ENCODE measurements at regions of chr10 and their contacts with region 1.

Region 1: DNA sequence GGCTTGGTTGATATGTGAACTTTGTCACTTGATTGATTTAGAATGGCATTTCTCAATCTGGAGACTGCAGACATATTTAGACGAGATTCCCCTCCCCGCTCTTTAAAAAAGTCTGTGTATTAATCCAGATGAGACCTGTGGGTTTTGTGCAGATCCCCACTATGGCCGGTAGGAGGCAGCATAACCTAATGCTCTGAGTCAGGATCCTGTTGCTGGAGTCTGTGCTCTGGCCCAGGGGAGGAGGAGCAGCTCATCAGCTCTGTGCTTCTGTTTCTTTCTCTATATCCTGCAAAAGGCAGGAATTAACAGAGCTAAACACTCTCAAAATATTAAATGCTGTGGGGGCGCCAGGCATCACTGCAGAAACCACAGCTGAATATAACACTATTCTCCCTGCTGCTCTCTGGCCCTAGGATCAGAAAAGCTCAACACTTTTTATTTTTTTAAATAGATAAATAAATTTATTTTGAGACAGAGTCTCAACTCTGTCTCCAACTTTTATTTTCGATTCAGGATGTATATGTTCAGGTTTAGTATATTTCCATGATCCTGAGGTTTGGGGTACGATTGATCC is 23.9 kb upstream of the SEPHS1 start:
- DNase-seq: peak; percentile 55
- ATAC-seq: peak; percentile 91

Region 2: GRCh38 chr10:13234172-13234571 is 137.8 kb before region 1 on chr10 and contains the start of gene UCMA:
- intact Hi-C with region 1: no loop called
- DNase-seq: no peak
- ATAC-seq: no peak
- total RNA-seq, gene UCMA: not detected

Region 3: DNA sequence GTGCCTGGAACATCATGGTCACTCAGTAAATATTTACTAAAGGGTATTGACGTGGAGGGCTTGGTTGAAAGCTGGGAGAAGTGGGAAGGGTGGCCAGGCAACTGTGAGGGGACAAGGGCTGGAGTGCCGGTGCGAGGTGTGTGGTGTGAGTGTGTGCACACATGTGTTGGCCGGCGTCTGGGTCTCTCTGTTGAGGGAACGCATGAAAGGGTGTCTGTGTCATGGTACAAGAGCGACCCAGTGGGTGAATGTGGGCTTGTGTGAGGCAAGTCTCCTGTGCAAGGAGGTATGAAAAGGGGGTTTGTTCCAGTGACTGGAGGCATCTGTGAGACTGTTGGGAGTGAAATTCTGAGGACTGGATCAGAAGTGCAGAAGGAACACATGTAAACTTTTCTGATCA is 108.4 kb before region 1 on chr10:
- intact Hi-C with region 1: no loop called
- DNase-seq: no peak
- ATAC-seq: no peak

Region 4: GRCh38 chr10:13404305-13404759 is 32.3 kb after region 1 on chr10:
- intact Hi-C with region 1: no loop called
- DNase-seq: no peak
- ATAC-seq: no peak

Region 5: DNA sequence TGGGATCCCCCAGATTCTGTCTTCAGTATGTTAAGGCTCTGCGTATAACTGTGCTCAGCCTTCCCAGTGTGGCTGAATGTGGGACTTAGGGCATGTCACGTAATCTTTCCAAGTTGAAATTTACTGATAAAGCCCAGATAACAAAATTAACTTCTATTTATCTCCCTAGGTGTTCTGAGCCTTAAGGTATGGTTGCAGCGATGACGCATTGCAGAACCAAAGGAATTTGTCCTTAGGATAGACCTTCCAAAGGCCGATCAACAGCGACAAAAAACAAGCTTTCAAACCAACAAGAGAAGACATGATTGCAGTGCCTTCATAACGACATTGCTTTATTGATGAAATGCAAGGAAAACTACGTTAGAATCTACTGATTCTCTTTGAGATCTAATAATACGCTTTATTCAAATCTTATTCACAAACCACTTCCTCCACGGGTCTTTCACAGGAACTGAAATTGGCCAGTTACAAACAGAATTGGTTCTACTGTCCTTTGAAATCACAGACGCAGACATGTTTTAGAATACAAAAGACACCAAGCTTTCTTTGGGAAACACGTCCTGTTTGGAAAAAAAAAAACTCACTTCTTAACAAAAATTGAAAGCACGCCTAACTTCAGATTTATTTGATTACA is 50.7 kb after region 1 on chr10:
- intact Hi-C with region 1: no loop called
- DNase-seq: no peak
- ATAC-seq: no peak

Region 6: DNA sequence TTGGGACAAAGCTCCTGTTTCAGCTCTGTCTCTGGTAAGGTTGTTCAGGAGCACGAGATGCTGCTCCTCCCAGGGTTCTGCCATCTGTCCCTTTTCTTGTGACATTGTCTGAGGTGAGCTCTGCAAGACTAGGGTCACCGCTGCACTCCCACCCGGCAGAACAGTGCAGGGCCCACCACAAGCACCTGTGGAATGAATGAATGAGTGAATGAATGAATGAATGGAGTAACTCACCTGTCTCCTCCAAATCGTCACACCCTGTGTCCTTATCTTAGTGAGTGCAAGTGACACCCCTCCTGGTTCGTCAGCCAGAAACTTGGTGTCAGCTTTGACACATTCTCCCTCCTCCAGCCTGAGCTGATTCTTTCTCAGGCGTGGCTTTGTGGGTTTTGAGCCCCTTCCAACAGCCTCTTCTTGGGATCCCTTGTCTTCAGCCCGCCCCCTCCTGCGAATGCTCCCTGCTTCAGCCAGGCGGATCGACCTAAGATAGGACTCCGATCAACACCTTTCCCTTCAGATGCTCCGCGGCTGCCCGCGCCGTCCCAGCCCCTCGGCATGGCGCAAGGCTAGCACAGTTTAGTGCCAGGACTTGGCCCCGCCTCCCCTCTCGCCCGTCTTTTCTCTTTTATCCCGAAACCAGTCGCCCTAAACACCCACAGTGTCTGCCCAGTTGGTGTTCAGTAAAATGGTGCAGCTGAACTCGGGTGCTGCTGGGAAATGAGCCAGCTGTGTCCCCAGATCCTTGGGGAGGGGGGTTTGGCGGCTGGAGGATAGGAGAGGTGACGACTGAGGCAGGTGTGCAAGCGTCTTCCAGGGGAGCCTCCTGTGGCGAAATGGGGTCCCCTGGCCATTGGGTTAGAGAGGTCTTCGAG is 67.6 kb after region 1 on chr10:
- intact Hi-C with region 1: loop called (anchors 10 kb)
- DNase-seq: peak; percentile 35
- ATAC-seq: peak; percentile 62